ENCODE measurements at regions of chr7 and their contacts with region 1.

Region 1: GRCh38 chr7:38222481-38223096 is 44.5 kb downstream of the STARD3NL start:
- DNase-seq: peak; percentile 66
- H3K4me3 ChIP-seq: no peak overlapping the region
- H3K27ac ChIP-seq: peak overlapping the region; percentile 67 to 79
- H3K4me1 ChIP-seq: peaks cover 16% of the 10 kb centered on the region
- H3K27me3 ChIP-seq: no peaks in the 10 kb centered on the region
- CTCF ChIP-seq: peak; percentile 38 to 96 (median 94)
- POLR2A ChIP-seq: no peak

Region 2: GRCh38 chr7:37901236-37901827 is 321.3 kb before region 1 on chr7:
- intact Hi-C with region 1: loop called (anchors 2 kb)
- DNase-seq: no peak
- H3K4me3 ChIP-seq: no peak overlapping the region
- H3K27ac ChIP-seq: no peak overlapping the region
- H3K4me1 ChIP-seq: no peaks in the 10 kb centered on the region
- H3K27me3 ChIP-seq: no peaks in the 10 kb centered on the region
- CTCF ChIP-seq: peak; percentile 38 to 65 (median 46)
- POLR2A ChIP-seq: no peak

Region 3: DNA sequence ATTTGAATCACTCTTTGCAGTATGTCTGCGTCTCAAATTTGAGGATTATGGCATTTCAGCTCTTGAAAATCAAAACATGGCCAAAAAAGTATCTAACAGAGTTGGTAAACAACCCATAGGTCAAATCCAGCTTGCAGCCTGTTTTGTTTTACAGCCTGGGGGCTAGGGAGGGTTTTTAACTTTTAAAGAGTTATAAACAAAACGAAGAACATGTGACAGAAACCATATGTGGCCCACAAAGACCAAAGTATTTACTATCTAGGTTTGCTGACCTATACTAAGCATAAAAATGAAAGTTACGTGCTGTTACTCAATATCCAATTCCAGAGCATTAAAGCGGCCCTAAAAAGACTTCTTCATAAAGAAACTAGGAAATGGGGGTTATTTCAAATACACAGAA is 100.1 kb before region 1 on chr7:
- intact Hi-C with region 1: no loop called
- DNase-seq: no peak
- H3K4me3 ChIP-seq: no peak overlapping the region
- H3K27ac ChIP-seq: no peak overlapping the region
- H3K4me1 ChIP-seq: no peaks in the 10 kb centered on the region
- H3K27me3 ChIP-seq: no peaks in the 10 kb centered on the region
- CTCF ChIP-seq: no peak
- POLR2A ChIP-seq: no peak